Mammary epithelial cell (primary cell): ENCODE measurements at regions of chr17 and their contacts with region 1.

Region 1: GRCh38 chr17:30336369-30337171 is 2.7 kb upstream of the TMIGD1 start:
- DNase-seq: peak; percentile 52
- H3K4me3 ChIP-seq: no peak overlapping the region
- H3K27ac ChIP-seq: no peak overlapping the region
- H3K4me1 ChIP-seq: peaks cover 29% of the 10 kb centered on the region
- H3K27me3 ChIP-seq: no peaks in the 10 kb centered on the region
- CTCF ChIP-seq: peak; percentile 61 to 81

Region 2: DNA sequence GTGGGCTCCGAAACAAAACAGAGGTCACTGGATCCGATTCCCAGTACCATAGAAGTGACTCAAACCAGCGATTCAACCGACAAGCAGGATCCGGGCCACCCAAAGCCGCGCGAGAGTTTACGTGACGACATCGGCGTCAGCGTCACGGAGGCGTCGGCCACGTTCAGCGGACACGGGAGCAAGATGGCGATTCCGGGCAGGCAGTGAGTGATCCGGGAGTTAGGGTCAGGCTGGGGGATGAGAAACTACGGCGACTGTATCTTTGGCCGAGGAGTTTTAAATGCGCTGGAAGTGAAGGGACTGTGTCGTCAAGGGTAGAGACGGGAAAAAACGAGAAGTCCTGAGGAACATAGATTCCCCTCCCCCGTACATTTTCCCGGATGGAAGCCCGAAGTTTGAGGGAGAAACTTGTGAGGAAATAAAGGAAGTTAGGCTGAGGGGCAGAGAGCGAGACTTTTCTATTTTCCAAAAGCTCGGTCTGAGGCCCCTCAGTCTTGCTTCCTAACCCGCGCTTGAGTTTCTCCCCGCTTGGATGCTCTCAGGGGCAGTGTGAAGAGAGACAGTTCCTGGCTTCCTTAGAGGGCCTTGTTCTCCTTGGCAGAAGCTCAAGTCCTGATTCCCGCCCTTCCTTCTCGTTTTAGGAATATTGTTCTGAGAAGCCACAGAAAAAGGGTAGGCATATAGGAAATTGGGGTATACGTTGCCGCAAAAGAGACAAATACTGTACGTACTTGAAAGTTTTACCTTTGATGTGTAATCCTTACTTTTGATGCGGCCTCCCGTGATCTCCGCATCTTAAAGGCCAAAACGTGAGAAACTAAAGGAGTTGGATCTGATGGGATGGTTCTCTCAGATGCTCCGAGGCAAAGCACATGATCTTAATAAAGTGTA is 219.7 kb before region 1 on chr17 and contains the start of gene NSRP1:
- CTCF ChIA-PET with region 1: no interaction called
- dilution Hi-C with region 1: no loop called
- in situ Hi-C with region 1: loop called (anchors 10 kb)
- intact Hi-C with region 1: no loop called
- DNase-seq: peak; percentile 93
- H3K4me3 ChIP-seq: peak within 1 kb of the TSS; percentile 54 to 76 (median 74)
- H3K27ac ChIP-seq: peak within 1 kb of the TSS; percentile 98
- H3K4me1 ChIP-seq: no peaks in the 10 kb centered on the region
- H3K27me3 ChIP-seq: no peaks in the 10 kb centered on the region
- CTCF ChIP-seq: no peak
- total RNA-seq, gene NSRP1: 4.8 to 32.5 TPM

Region 3: GRCh38 chr17:30124273-30124796 is 212.2 kb before region 1 on chr17:
- CTCF ChIA-PET with region 1: interaction called, 5 read pairs
- dilution Hi-C with region 1: no loop called
- in situ Hi-C with region 1: loop called (anchors 10 kb)
- intact Hi-C with region 1: loop called (anchors 1 kb)
- DNase-seq: no peak
- H3K4me3 ChIP-seq: no peak overlapping the region
- H3K27ac ChIP-seq: no peak overlapping the region
- H3K4me1 ChIP-seq: no peaks in the 10 kb centered on the region
- H3K27me3 ChIP-seq: no peaks in the 10 kb centered on the region
- CTCF ChIP-seq: no peak

Region 4: GRCh38 chr17:30203471-30203981 is 133.0 kb before region 1 on chr17:
- CTCF ChIA-PET with region 1: no interaction called
- dilution Hi-C with region 1: no loop called
- in situ Hi-C with region 1: no loop called
- intact Hi-C with region 1: no loop called
- DNase-seq: no peak
- H3K4me3 ChIP-seq: no peak overlapping the region
- H3K27ac ChIP-seq: no peak overlapping the region
- H3K4me1 ChIP-seq: no peaks in the 10 kb centered on the region
- H3K27me3 ChIP-seq: peaks cover 4% of the 10 kb centered on the region
- CTCF ChIP-seq: no peak

Region 5: DNA sequence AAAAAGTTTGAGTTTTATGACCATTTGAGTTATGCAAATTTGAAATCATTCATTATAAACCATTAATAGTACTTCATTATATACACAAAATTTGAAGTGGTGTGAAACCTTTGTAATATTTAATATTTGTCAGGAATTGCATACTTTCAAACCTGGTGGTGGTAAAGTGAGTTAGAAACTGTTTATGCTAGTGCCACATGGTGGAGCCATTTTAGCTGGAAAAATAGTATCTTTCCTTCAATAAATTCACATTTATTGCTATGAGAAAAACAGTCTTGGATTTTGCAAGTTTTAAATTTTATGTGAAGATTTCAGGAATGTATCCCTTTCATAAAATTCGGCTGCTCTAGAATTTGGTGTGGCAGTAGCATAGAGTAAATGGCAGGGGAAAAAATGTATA is 37.6 kb before region 1 on chr17:
- CTCF ChIA-PET with region 1: no interaction called
- dilution Hi-C with region 1: no loop called
- in situ Hi-C with region 1: no loop called
- intact Hi-C with region 1: loop called (anchors 2 kb)
- DNase-seq: no peak
- H3K4me3 ChIP-seq: no peak overlapping the region
- H3K27ac ChIP-seq: no peak overlapping the region
- H3K4me1 ChIP-seq: no peaks in the 10 kb centered on the region
- H3K27me3 ChIP-seq: peaks cover 33% of the 10 kb centered on the region
- CTCF ChIP-seq: peak; percentile 20 to 38

Region 6: DNA sequence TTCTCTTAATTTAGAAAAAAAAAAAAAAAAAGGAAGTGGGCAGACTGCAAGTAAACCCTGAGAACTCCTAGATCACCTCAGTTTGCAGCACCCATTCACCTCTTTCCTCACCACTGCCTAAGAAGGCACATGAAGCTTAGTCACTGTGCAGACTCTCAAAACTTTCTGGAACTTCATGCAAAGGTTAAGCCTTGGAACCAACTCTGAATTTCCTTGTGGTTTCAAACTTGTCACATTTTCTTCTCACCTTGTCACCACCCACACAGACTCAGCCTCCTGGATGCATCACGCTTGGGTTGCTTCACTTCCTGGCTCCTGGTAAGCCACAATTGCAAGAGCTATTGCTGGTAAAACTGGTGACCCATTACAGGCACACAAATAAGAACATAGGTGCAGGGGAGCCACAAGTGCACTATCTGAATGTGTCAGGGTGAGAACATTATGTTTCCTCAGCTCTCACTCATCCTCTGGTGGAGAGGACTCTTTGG is 27.2 kb after region 1 on chr17:
- CTCF ChIA-PET with region 1: no interaction called
- dilution Hi-C with region 1: no loop called
- in situ Hi-C with region 1: no loop called
- intact Hi-C with region 1: no loop called
- DNase-seq: peak; percentile 99
- H3K4me3 ChIP-seq: no peak overlapping the region
- H3K27ac ChIP-seq: peak overlapping the region; percentile 42
- H3K4me1 ChIP-seq: peaks cover 14% of the 10 kb centered on the region
- H3K27me3 ChIP-seq: no peaks in the 10 kb centered on the region
- CTCF ChIP-seq: no peak